ENCODE measurements at regions of chr15 and their contacts with region 1.

Region 1: GRCh38 chr15:44308415-44308814 is 19.9 kb downstream of the GOLM2 start:
- DNase-seq: peak; percentile 62
- ATAC-seq: peak; percentile 90
- H3K4me3 Mint-ChIP-seq: peak overlapping the region; percentile 58
- H3K27ac Mint-ChIP-seq: peak overlapping the region; percentile 92
- H3K4me1 Mint-ChIP-seq: peaks cover 48% of the 10 kb centered on the region
- H3K27me3 Mint-ChIP-seq: no peaks in the 10 kb centered on the region

Region 2: GRCh38 chr15:44394062-44394461 is 85.6 kb after region 1 on chr15:
- CTCF ChIA-PET with region 1: no interaction called
- POLR2A ChIA-PET with region 1: no interaction called
- intact Hi-C with region 1: no loop called
- DNase-seq: no peak
- ATAC-seq: no peak
- H3K4me3 Mint-ChIP-seq: no peak overlapping the region
- H3K27ac Mint-ChIP-seq: no peak overlapping the region
- H3K4me1 Mint-ChIP-seq: peaks cover 6% of the 10 kb centered on the region
- H3K27me3 Mint-ChIP-seq: no peaks in the 10 kb centered on the region

Region 3: GRCh38 chr15:44414001-44414400 is 105.6 kb after region 1 on chr15:
- CTCF ChIA-PET with region 1: no interaction called
- POLR2A ChIA-PET with region 1: no interaction called
- intact Hi-C with region 1: loop called in 1 of 2 experiments (anchors 1 kb)
- DNase-seq: peak; percentile 12
- ATAC-seq: peak; percentile 98
- H3K4me3 Mint-ChIP-seq: no peak overlapping the region
- H3K27ac Mint-ChIP-seq: no peak overlapping the region
- H3K4me1 Mint-ChIP-seq: peaks cover 3% of the 10 kb centered on the region
- H3K27me3 Mint-ChIP-seq: no peaks in the 10 kb centered on the region

Region 4: DNA sequence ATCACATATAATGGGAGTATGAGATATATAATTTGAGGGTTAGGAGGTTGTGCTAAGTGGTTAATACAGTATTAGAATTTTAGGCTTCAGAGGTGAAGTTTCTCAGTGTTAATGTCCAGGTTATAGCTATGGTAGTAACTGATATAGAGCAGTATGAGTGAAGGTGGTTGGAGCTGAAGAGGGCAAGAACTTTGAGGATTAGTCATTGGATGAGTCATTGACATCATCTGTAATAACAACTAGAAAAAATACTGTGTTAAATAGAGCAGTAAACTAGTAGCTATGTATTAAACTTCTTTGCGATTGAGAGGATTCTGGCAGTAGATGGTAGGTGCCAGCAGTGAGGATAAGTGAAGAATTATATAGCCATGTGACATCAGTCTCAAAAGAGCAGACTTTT is 181.0 kb after region 1 on chr15:
- CTCF ChIA-PET with region 1: no interaction called
- POLR2A ChIA-PET with region 1: no interaction called
- intact Hi-C with region 1: loop called in 1 of 2 experiments (anchors 1 kb)
- DNase-seq: no peak
- ATAC-seq: peak; percentile 94
- H3K4me3 Mint-ChIP-seq: no peak overlapping the region
- H3K27ac Mint-ChIP-seq: peak overlapping the region; percentile 71
- H3K4me1 Mint-ChIP-seq: peaks cover 43% of the 10 kb centered on the region
- H3K27me3 Mint-ChIP-seq: no peaks in the 10 kb centered on the region

Region 5: GRCh38 chr15:44501768-44502366 is 193.5 kb after region 1 on chr15:
- CTCF ChIA-PET with region 1: no interaction called
- POLR2A ChIA-PET with region 1: no interaction called
- intact Hi-C with region 1: loop called (anchors 1 to 2 kb)
- DNase-seq: no peak
- ATAC-seq: peak; percentile 48
- H3K4me3 Mint-ChIP-seq: no peak overlapping the region
- H3K27ac Mint-ChIP-seq: no peak overlapping the region
- H3K4me1 Mint-ChIP-seq: peaks cover 22% of the 10 kb centered on the region
- H3K27me3 Mint-ChIP-seq: no peaks in the 10 kb centered on the region

Region 6: GRCh38 chr15:44536962-44537734 is 228.7 kb after region 1 on chr15 and contains the start of gene EIF3J:
- CTCF ChIA-PET with region 1: no interaction called
- POLR2A ChIA-PET with region 1: no interaction called
- intact Hi-C with region 1: loop called in 1 of 2 experiments (anchors 2 kb)
- DNase-seq: peak; percentile 97
- ATAC-seq: peak; percentile 95
- H3K4me3 Mint-ChIP-seq: peak within 1 kb of the TSS; percentile 75
- H3K27ac Mint-ChIP-seq: peak within 1 kb of the TSS; percentile 95
- H3K4me1 Mint-ChIP-seq: peaks cover 45% of the 10 kb centered on the region
- H3K27me3 Mint-ChIP-seq: no peaks in the 10 kb centered on the region
- total RNA-seq, gene EIF3J: 106 to 143 TPM

Region 7: DNA sequence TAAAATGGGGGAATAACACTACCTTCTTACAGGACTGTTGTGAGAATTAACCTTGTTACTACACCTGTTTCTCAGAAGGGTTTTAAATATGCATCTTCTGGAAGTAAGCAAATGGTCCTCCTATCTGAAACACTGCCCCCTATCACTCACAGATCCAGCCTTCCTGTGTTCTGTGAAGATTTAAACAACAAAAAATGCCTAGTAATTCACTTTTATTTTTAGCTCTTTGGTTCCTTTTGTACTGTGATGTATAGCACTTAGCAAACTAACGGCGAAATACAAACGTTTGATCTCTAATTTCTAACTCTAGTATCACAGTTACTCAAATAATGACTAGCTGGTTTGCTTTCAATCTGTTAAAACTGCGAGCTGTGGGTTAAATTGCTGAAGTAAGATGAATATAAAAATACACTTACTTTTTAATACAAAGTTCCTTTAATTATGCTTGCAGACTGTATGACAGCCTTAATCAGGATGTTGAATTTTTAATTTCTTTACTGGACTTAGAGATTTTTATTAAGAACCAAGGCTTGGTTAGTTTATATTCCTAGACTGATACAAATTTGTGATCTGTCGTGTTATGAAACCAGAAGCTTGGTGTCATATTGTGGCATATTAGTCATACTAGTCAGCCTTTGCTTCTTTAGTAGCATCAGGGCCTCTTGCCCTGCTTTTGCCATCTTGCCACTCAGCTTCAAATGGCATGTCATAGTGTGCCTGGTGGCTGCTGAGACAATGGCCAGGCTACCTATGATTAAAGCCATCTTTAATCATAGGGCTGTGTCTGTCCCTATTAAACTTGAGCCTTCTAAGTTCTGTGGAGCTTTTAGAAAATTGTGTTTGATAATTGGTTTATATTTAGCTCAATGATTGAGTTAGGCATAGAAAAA is 237.7 kb after region 1 on chr15:
- CTCF ChIA-PET with region 1: interaction called, 3 read pairs
- POLR2A ChIA-PET with region 1: interaction called, 3 read pairs
- intact Hi-C with region 1: loop called (anchors 1 to 2 kb)
- DNase-seq: peak; percentile 72
- ATAC-seq: peak; percentile 94
- H3K4me3 Mint-ChIP-seq: peak overlapping the region; percentile 51
- H3K27ac Mint-ChIP-seq: peak overlapping the region; percentile 85
- H3K4me1 Mint-ChIP-seq: peaks cover 58% of the 10 kb centered on the region
- H3K27me3 Mint-ChIP-seq: no peaks in the 10 kb centered on the region

Region 8: DNA sequence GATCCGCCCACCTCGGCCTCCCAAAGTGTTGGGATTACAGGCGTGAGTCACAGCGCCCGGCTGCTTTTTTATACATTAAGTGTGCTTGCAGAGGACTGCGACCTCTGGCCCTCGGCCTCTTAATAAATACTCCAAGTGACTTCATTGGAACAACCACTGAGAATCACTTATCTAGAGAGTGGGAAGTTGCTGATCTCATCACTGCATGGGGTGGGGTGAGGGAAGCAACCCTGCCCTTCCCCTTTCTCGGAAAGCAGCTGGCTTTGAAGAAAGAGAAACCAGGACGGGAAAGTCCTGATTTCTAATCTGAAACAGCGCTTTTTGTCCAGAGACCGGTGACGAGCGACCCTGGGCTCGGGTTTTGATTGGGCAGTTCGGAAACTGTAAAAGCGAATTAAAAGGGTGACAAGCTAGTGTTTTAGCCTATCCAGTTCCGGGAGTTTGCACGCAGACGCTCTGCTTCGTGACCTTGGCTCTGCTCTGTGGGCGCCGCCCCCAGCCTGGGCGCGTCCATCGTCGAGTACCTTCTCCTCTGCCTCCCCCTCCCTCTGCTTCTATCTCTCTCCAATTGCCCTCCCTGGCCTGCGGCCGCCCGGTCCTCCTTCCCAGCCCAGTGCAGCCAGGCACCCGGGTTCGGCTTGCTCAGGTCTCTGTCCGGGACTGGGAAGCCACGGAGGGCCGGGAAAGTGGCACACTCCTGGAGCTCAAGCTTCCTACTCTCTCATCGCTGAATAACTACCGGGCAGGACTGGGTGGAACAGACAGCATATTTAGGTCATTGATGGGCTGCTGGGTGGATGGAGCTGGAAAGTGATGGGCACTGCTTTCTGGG is 420.4 kb after region 1 on chr15:
- CTCF ChIA-PET with region 1: no interaction called
- POLR2A ChIA-PET with region 1: interaction called, 6 read pairs
- intact Hi-C with region 1: loop called in 1 of 2 experiments (anchors 2 kb)
- DNase-seq: peak; percentile 96
- ATAC-seq: peak; percentile 78
- H3K4me3 Mint-ChIP-seq: peak overlapping the region; percentile 91
- H3K27ac Mint-ChIP-seq: peak overlapping the region; percentile 99
- H3K4me1 Mint-ChIP-seq: peaks cover 68% of the 10 kb centered on the region
- H3K27me3 Mint-ChIP-seq: no peaks in the 10 kb centered on the region